GM13977 (cell line): ENCODE measurements at regions of chr4 and their contacts with region 1.

Region 1: GRCh38 chr4:110034026-110034393 is 121.3 kb downstream of the EGF start:
- DNase-seq: peak; percentile 48
- CTCF ChIP-seq: no peak

Region 2: GRCh38 chr4:110201502-110201901 is 167.5 kb after region 1 on chr4:
- in situ Hi-C with region 1: loop called (anchors 10 kb)
- DNase-seq: no peak
- CTCF ChIP-seq: no peak

Region 3: GRCh38 chr4:110265001-110265400 is 231.0 kb after region 1 on chr4:
- in situ Hi-C with region 1: no loop called
- DNase-seq: no peak
- CTCF ChIP-seq: no peak